ENCODE measurements at regions of chr10 and their contacts with region 1.

Region 1: GRCh38 chr10:62610649-62611229 is 193.8 kb upstream of the ADO start:
- DNase-seq: peak; percentile 87
- H3K4me3 ChIP-seq: no peak overlapping the region
- H3K27ac ChIP-seq: no peak overlapping the region
- H3K4me1 ChIP-seq: peaks cover 26% of the 10 kb centered on the region
- H3K27me3 ChIP-seq: no peaks in the 10 kb centered on the region
- CTCF ChIP-seq: peak; percentile 96

Region 2: GRCh38 chr10:62437696-62438095 is 173.0 kb before region 1 on chr10:
- CTCF ChIA-PET with region 1: interaction called, 11 read pairs
- POLR2A ChIA-PET with region 1: no interaction called
- intact Hi-C with region 1: no loop called
- DNase-seq: peak; percentile 90
- H3K4me3 ChIP-seq: no peak overlapping the region
- H3K27ac ChIP-seq: no peak overlapping the region
- H3K4me1 ChIP-seq: peaks cover 25% of the 10 kb centered on the region
- H3K27me3 ChIP-seq: no peaks in the 10 kb centered on the region
- CTCF ChIP-seq: peak; percentile 89

Region 3: DNA sequence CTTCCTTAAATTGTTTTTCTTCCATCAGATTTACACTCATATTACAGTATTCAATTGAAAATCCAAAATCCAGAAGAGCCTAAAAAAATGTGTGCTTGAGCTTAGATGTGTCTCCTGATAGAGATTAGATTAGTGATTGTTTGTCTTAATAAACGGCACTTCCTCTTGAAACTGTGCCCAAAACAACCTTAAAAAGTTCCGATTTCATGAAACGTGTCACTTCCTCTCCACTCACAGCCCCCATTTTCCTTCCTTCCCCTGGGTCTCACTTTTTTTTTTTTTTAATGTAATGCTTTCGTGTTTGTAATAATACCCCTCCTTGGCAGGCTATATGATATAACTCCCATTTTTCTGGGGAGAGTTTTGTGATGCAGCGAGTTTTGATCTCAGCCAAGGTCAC is 79.0 kb after region 1 on chr10:
- CTCF ChIA-PET with region 1: no interaction called
- POLR2A ChIA-PET with region 1: no interaction called
- intact Hi-C with region 1: loop called (anchors 1 kb)
- DNase-seq: peak; percentile 81
- H3K4me3 ChIP-seq: no peak overlapping the region
- H3K27ac ChIP-seq: peak overlapping the region; percentile 94
- H3K4me1 ChIP-seq: peaks cover 51% of the 10 kb centered on the region
- H3K27me3 ChIP-seq: no peaks in the 10 kb centered on the region
- CTCF ChIP-seq: no peak

Region 4: GRCh38 chr10:62972103-62972502 is 361.4 kb after region 1 on chr10:
- CTCF ChIA-PET with region 1: no interaction called
- POLR2A ChIA-PET with region 1: no interaction called
- intact Hi-C with region 1: no loop called
- DNase-seq: no peak
- H3K4me3 ChIP-seq: no peak overlapping the region
- H3K27ac ChIP-seq: no peak overlapping the region
- H3K4me1 ChIP-seq: no peaks in the 10 kb centered on the region
- H3K27me3 ChIP-seq: no peaks in the 10 kb centered on the region
- CTCF ChIP-seq: no peak

Region 5: GRCh38 chr10:63003816-63004453 is 393.2 kb after region 1 on chr10:
- CTCF ChIA-PET with region 1: no interaction called
- POLR2A ChIA-PET with region 1: no interaction called
- intact Hi-C with region 1: loop called (anchors 10 kb)
- DNase-seq: peak; percentile 31
- H3K4me3 ChIP-seq: no peak overlapping the region
- H3K27ac ChIP-seq: no peak overlapping the region
- H3K4me1 ChIP-seq: peaks cover 8% of the 10 kb centered on the region
- H3K27me3 ChIP-seq: no peaks in the 10 kb centered on the region
- CTCF ChIP-seq: peak; percentile 49; the same call in 1 of the 2 replicates

Region 6: GRCh38 chr10:63083904-63084689 is 473.4 kb after region 1 on chr10:
- CTCF ChIA-PET with region 1: interaction called, 4 read pairs
- POLR2A ChIA-PET with region 1: no interaction called
- intact Hi-C with region 1: loop called (anchors 5 kb)
- DNase-seq: peak; percentile 90
- H3K4me3 ChIP-seq: no peak overlapping the region
- H3K27ac ChIP-seq: no peak overlapping the region
- H3K4me1 ChIP-seq: peaks cover 7% of the 10 kb centered on the region
- H3K27me3 ChIP-seq: no peaks in the 10 kb centered on the region
- CTCF ChIP-seq: peak; percentile 82

Region 7: GRCh38 chr10:63157845-63158624 is 547.3 kb after region 1 on chr10:
- CTCF ChIA-PET with region 1: interaction called, 3 read pairs
- POLR2A ChIA-PET with region 1: no interaction called
- intact Hi-C with region 1: loop called (anchors 5 kb)
- DNase-seq: peak; percentile 89
- H3K4me3 ChIP-seq: no peak overlapping the region
- H3K27ac ChIP-seq: no peak overlapping the region
- H3K4me1 ChIP-seq: peaks cover 15% of the 10 kb centered on the region
- H3K27me3 ChIP-seq: no peaks in the 10 kb centered on the region
- CTCF ChIP-seq: peak; percentile 86

Region 8: GRCh38 chr10:63767138-63767801 is 1156.5 kb after region 1 on chr10:
- CTCF ChIA-PET with region 1: no interaction called
- POLR2A ChIA-PET with region 1: no interaction called
- intact Hi-C with region 1: loop called (anchors 5 kb)
- DNase-seq: peak; percentile 71
- H3K4me3 ChIP-seq: no peak overlapping the region
- H3K27ac ChIP-seq: no peak overlapping the region
- H3K4me1 ChIP-seq: peaks cover 32% of the 10 kb centered on the region
- H3K27me3 ChIP-seq: no peaks in the 10 kb centered on the region
- CTCF ChIP-seq: peak; percentile 70

Measured in A673 (cell line).